ENCODE measurements at regions of chr14 and their contacts with region 1.

Region 1: DNA sequence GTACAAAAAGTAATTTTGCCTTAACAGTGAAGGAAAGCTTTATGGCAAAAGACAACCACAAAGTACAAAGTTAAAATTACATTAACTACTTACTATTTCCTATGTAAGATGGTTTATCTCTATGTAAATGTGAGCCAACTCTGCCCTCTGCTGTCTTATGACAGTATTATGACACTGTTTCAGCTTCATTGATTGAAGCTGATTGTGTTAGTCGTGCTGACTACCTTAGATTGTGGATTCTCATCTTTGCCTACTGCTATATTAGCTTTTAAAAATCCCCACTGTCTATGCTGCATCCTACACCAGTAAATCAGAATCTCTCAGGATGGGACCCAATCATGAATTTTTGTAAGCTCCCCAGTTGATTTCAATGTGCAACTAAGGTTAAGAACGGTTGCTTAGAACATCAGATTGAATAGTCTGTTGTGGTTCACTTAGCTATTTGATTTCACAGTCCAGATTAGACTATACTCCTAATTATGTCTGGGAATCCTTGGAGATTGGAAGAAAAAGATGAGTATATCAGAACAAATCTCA is 12.2 kb upstream of the SPTB start:
- DNase-seq: peak; percentile 56 to 80
- ATAC-seq: peak; percentile 95 to 99
- H3K4me3 ChIP-seq: no peak overlapping the region
- H3K27ac ChIP-seq: no peak overlapping the region
- H3K4me1 ChIP-seq: no peaks in the 10 kb centered on the region
- CTCF ChIP-seq: peak; percentile 79
- EP300 ChIP-seq: no peak
- POLR2A ChIP-seq: no peak
- RAD21 ChIP-seq: peak; percentile 89 to 90

Region 2: DNA sequence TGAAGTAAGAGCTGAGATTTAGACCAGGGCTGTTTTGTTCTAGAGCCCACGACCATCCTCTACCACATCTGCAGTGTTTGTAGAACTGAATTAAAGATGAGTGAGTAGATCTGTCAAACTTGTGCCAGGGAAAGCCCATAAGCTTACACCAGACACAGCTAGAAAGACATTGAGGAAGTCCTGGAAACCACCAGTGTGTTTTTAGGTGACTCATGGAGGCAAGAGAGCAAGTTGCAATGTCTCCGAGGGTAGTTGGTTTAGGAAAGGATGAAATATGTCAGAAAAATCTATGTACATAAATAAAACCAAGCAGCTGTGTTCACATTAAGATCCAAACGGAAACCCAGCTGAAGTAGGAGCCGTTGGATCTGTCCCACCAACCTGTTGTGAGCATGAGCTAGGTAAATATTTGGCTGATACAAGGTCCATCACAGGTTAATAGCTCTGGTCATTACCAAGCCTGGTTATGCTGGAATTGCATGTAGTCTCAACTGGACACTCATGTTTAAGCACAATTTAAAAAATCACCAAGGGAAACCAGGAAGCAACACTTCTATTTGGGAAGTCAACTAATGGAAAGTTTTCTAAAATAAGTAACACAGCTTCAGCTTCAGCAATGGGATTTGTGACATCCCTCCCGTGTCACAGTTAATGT is 237.5 kb before region 1 on chr14:
- CTCF ChIA-PET with region 1: interaction called, 10 read pairs
- POLR2A ChIA-PET with region 1: no interaction called
- DNase-seq: peak; percentile 51 to 78
- ATAC-seq: peak; percentile 75 to 86
- H3K4me3 ChIP-seq: no peak overlapping the region
- H3K27ac ChIP-seq: peak overlapping the region; percentile 65 to 93
- H3K4me1 ChIP-seq: peaks cover 28% of the 10 kb centered on the region
- CTCF ChIP-seq: no peak
- EP300 ChIP-seq: no peak
- POLR2A ChIP-seq: no peak
- RAD21 ChIP-seq: no peak

Region 3: GRCh38 chr14:64764641-64765520 is 127.0 kb before region 1 on chr14:
- CTCF ChIA-PET with region 1: interaction called, 102 read pairs
- POLR2A ChIA-PET with region 1: interaction called, 7 read pairs
- DNase-seq: peak; percentile 76 to 83
- ATAC-seq: peak; percentile 21 to 70; a peak in 4 of 6 replicates
- H3K4me3 ChIP-seq: 0 out of 3 replicates have a peak overlapping the region, but pooled peaks have one; percentile 24
- H3K27ac ChIP-seq: peak overlapping the region; percentile 92 to 93
- H3K4me1 ChIP-seq: peaks cover 64% of the 10 kb centered on the region
- CTCF ChIP-seq: peak; percentile 88
- EP300 ChIP-seq: no peak
- POLR2A ChIP-seq: no peak
- RAD21 ChIP-seq: peak; percentile 88 to 92

Region 4: GRCh38 chr14:64800000-64800399 is 91.9 kb before region 1 on chr14:
- CTCF ChIA-PET with region 1: interaction called, 213 read pairs
- POLR2A ChIA-PET with region 1: no interaction called
- DNase-seq: peak; percentile 53 to 62
- ATAC-seq: peak; percentile 30 to 71; a peak in 4 of 6 replicates
- H3K4me3 ChIP-seq: no peak overlapping the region
- H3K27ac ChIP-seq: peak overlapping the region; percentile 15 to 32; a peak in 1 of 6 replicates
- H3K4me1 ChIP-seq: peaks cover 17% of the 10 kb centered on the region
- CTCF ChIP-seq: peak; percentile 55
- EP300 ChIP-seq: no peak
- POLR2A ChIP-seq: no peak
- RAD21 ChIP-seq: peak in 1 of 2 experiments; percentile 30; a peak in 2 of 5 replicates

Region 5: GRCh38 chr14:64835431-64835830 is 56.5 kb before region 1 on chr14:
- CTCF ChIA-PET with region 1: interaction called, 250 read pairs
- POLR2A ChIA-PET with region 1: no interaction called
- DNase-seq: no peak
- ATAC-seq: no peak
- H3K4me3 ChIP-seq: no peak overlapping the region
- H3K27ac ChIP-seq: no peak overlapping the region
- H3K4me1 ChIP-seq: no peaks in the 10 kb centered on the region
- CTCF ChIP-seq: no peak
- EP300 ChIP-seq: no peak
- POLR2A ChIP-seq: no peak
- RAD21 ChIP-seq: no peak

Region 6: GRCh38 chr14:64880221-64881121 is 11.4 kb before region 1 on chr14:
- CTCF ChIA-PET with region 1: interaction called, 86 read pairs
- POLR2A ChIA-PET with region 1: no interaction called
- DNase-seq: peak; percentile 40 to 73
- ATAC-seq: peak; percentile 79 to 91
- H3K4me3 ChIP-seq: peak overlapping the region; percentile 85
- H3K27ac ChIP-seq: peak overlapping the region; percentile 65 to 82
- H3K4me1 ChIP-seq: no peaks in the 10 kb centered on the region
- CTCF ChIP-seq: no peak
- EP300 ChIP-seq: no peak
- POLR2A ChIP-seq: no peak
- RAD21 ChIP-seq: no peak

Region 7: DNA sequence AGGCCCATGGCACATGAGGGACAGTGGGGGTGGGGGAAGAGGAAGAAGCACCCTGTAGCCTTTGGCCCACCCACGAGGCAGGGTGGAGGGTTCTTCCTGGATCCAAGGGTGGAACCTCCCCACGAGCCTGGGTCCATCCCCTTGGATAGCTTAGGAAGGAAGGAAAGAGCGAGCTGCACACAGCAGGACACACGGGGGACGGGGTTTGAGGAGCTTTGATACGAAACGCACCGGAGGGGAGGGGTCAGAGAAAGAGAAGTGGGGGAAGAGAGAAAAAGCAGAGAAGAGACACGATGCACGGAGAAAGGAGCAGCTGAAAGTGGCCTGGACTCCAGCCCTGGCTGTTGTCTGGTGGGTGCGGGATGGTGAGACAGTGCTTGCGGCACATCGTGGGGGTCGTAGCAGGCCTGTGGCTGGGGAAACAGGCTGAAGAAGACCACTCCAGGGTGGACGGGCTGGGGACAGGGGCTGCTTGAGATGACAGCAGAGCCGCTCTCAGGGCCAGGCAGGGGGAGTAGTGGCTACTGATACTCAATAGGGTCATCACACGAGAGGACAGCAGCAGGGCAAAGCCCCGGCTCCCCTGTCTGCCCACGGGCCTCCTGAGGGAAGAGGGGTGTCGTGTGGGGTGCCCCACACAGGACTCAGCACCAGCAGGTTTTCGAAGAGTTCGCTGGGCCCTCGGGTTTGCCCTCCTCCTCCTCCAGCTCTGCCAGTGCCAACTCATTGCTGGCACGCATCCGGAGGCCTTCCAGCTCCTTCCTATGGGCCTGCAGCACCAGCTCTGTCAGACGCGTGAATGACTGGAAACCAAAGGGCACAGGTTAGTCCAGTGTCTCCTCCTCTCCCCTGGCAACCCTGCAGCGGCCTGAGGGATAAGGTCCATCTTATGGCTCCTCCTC is 56.1 kb after region 1 on chr14:
- CTCF ChIA-PET with region 1: no interaction called
- POLR2A ChIA-PET with region 1: no interaction called
- DNase-seq: no peak
- ATAC-seq: no peak
- H3K4me3 ChIP-seq: no peak overlapping the region
- H3K27ac ChIP-seq: no peak overlapping the region
- H3K4me1 ChIP-seq: peaks cover 13% of the 10 kb centered on the region
- CTCF ChIP-seq: no peak
- EP300 ChIP-seq: no peak
- POLR2A ChIP-seq: no peak
- RAD21 ChIP-seq: no peak